ENCODE measurements at regions of chr1 and their contacts with region 1.

Region 1: GRCh38 chr1:216742625-216743024 is 19.4 kb upstream of the ESRRG start:
- DNase-seq: peak; percentile 54
- ATAC-seq: peak; percentile 48
- H3K4me3 ChIP-seq: no peak overlapping the region
- H3K27ac ChIP-seq: no peak overlapping the region
- H3K4me1 ChIP-seq: no peaks in the 10 kb centered on the region
- H3K27me3 ChIP-seq: peaks cover 31% of the 10 kb centered on the region
- CTCF ChIP-seq: peak; percentile 92

Region 2: GRCh38 chr1:215682232-215682631 is 1060.4 kb before region 1 on chr1:
- CTCF ChIA-PET with region 1: no interaction called
- POLR2A ChIA-PET with region 1: no interaction called
- intact Hi-C with region 1: loop called (anchors 1 kb)
- DNase-seq: peak; percentile 74
- ATAC-seq: peak; percentile 82
- H3K4me3 ChIP-seq: no peak overlapping the region
- H3K27ac ChIP-seq: no peak overlapping the region
- H3K4me1 ChIP-seq: no peaks in the 10 kb centered on the region
- H3K27me3 ChIP-seq: peaks cover 45% of the 10 kb centered on the region
- CTCF ChIP-seq: peak; percentile 79

Region 3: DNA sequence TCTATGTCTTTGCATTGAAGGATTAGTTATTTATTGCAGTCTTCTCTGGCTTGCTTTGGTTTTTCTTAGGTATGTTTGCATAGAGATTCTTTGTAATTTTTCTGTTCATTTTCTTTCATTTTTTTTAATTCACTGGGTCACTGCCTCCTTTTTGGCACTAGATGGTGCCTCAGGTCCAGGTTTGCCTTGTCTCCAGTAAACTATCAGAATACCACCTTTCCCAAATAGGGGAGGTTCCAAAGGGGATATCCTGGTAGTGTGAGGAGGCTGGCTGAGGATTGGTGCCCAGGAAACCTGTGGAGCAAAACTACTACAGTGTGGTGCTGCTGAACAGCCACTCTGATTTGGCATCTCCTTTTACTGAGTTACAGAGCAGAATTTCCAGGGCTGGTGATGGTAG is 918.4 kb before region 1 on chr1:
- CTCF ChIA-PET with region 1: no interaction called
- POLR2A ChIA-PET with region 1: no interaction called
- intact Hi-C with region 1: loop called (anchors 1 kb)
- DNase-seq: peak; percentile 59
- ATAC-seq: peak; percentile 81
- H3K4me3 ChIP-seq: no peak overlapping the region
- H3K27ac ChIP-seq: no peak overlapping the region
- H3K4me1 ChIP-seq: no peaks in the 10 kb centered on the region
- H3K27me3 ChIP-seq: peaks cover 22% of the 10 kb centered on the region
- CTCF ChIP-seq: peak; percentile 97

Region 4: DNA sequence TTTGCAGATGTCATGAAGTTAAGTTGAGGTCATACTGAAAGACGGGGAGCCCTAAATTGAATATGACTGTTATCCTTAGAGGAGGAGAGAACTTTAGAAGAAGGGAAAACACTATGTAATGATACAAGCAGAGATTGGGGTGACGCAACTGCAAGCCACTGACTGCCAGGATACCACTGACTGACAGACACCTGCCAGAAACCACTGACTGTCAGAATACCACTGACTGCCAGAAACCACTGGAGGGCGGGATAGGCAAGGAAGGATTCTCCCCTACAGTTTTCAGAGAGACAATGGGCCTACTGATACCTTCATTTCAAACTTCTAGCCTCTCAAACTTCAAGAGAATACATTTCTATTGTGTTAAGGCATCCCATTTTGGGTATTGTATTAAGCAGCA is 708.1 kb before region 1 on chr1:
- CTCF ChIA-PET with region 1: no interaction called
- POLR2A ChIA-PET with region 1: no interaction called
- intact Hi-C with region 1: loop called (anchors 1 kb)
- DNase-seq: peak; percentile 60
- ATAC-seq: peak; percentile 91
- H3K4me3 ChIP-seq: no peak overlapping the region
- H3K27ac ChIP-seq: no peak overlapping the region
- H3K4me1 ChIP-seq: no peaks in the 10 kb centered on the region
- H3K27me3 ChIP-seq: peaks cover 22% of the 10 kb centered on the region
- CTCF ChIP-seq: peak; percentile 67

Region 5: GRCh38 chr1:216183007-216183406 is 559.6 kb before region 1 on chr1:
- CTCF ChIA-PET with region 1: no interaction called
- POLR2A ChIA-PET with region 1: no interaction called
- intact Hi-C with region 1: loop called (anchors 5 kb)
- DNase-seq: peak; percentile 76
- ATAC-seq: peak; percentile 92
- H3K4me3 ChIP-seq: no peak overlapping the region
- H3K27ac ChIP-seq: no peak overlapping the region
- H3K4me1 ChIP-seq: no peaks in the 10 kb centered on the region
- H3K27me3 ChIP-seq: peaks cover 57% of the 10 kb centered on the region
- CTCF ChIP-seq: no peak

Region 6: GRCh38 chr1:217275655-217276398 is 533.2 kb after region 1 on chr1:
- CTCF ChIA-PET with region 1: no interaction called
- POLR2A ChIA-PET with region 1: no interaction called
- intact Hi-C with region 1: no loop called
- DNase-seq: peak; percentile 96
- ATAC-seq: peak; percentile 67
- H3K4me3 ChIP-seq: peak overlapping the region; percentile 50
- H3K27ac ChIP-seq: peak overlapping the region; percentile 92
- H3K4me1 ChIP-seq: peaks cover 48% of the 10 kb centered on the region
- H3K27me3 ChIP-seq: no peaks in the 10 kb centered on the region
- CTCF ChIP-seq: no peak